Right ventricle myocardium superior (tissue), 1 donor: ENCODE measurements at regions of chr16 and their contacts with region 1.

Region 1: DNA sequence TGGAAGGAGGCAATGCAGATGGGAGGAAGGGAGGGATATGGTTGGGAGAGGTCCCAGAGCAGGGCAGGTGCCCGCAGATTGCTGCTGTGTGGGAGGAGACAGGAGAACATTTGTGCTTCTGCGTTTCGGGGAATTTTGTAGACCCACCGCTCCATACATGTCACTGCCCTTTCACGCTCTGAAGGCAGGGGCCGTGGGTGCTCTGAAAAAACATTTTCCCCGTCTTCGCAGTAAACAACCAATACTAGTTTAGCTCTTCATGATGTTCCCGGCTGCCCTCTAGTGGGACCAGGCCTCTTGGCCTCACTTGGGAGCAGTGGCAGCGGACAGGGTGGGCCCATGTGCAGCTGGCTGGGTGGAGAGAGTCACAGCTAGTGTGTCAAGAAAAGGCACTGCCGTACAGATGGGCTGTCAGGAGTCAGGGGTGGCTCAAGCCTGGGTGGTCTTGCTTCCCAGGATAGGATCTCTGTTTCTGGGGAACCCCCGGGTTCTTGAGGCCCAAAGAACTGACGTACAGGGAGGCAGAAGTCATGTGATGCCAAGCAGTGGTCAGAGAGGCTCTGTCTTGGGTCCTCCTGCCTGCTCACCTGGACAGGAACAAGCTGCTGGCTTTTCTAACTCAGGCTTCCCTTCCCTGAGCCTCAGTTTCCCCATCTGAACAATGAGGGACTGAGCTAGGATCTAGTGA is 46.5 kb upstream of the CPNE2 start:
- DNase-seq: peak; percentile 86
- ATAC-seq: peak; percentile 90

Region 2: DNA sequence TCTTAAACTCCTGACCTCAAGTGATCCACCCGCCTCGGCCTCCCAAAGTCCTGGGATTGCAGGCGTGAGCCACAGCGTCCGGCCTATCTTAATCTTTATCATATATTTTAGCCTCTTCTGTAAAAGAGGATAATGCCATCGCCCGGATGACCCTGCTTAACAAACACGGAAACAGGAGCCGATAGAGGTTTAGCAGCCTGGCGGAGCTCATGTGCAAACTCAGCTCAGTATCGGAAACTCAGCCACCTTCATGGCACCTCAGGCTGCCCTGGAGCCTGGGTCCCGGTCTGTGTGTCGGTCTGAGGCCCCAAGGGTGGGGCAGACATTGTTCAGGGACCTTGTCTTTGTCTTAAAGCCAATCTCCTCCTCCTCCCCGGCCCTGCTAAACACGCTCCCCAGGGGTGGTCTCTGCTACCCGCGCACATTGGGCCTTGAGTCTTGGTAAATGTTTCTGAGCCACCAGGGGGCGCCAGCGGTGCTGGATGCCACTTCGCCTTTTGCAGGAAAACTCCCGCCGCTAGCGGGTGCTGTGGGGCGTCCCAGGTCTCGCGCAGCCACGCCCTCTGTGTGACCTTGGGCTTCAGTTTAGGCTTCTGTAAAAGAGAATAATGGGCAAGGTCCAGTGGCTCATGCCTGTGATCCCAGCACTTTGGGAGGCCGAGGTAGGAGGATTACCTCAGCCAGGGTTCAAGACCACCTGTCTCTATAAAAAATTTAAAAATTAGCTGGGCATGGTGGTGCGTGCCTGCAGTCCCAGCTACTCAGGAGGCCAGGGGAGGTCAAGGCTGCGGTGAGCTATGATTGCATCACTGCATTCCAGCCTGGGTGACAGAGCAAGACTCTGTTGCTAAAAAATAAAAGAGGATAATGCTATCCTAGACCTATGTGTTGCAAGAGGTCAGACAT is 81.3 kb before region 1 on chr16:
- intact Hi-C with region 1: loop called (anchors 5 kb)
- DNase-seq: peak; percentile 95
- ATAC-seq: peak; percentile 60

Region 3: GRCh38 chr16:57383276-57384247 is 337.7 kb after region 1 on chr16:
- intact Hi-C with region 1: no loop called
- DNase-seq: no peak
- ATAC-seq: peak; percentile 20